ENCODE measurements at regions of chr10 and their contacts with region 1.

Region 1: DNA sequence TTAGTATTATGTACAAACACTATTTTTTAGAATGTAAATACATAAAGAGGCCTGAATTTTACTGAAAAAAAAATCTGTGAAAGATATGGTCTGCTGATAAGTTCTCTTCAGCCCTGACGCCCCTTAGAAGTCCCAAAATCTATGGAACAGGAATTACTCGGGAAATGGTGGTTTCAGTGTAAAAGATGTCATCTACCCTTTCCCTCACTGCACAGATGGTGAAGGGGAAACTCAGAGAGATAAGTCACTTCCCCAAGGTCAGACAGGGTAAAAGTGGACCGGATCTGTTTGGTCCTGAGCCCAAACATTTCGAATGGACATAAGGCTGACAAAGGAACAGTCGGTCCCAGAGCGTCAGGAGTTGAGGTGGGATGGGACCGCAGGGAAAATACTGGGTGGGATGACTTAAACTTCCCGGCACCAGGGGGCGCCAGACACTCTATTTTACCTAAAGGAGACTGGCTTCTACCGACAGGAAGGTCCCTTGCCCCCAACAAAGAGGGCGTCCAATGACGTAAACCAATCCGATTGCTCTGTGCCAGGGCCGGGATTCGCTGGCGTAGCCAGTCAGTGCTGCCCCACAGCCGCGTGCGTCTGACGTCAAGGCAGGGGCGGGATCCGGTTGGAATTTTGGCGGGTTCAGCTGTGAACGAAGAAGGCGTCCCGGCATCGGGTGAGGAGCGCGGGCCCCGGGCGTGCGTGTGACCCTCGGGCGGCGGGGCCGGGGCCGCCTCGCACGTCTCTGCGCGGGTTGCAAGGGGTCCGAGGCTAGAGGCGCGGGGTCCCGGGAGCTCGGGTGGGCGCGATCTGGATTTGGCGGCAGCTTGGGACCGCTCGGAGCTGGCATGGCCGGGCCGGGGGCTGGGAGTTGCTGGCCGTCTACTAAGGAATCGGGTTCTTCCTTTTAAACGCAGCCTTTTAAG is at the start of gene MCM10:
- DNase-seq: peak; percentile 96
- ATAC-seq: peak; percentile 99
- H3K4me3 ChIP-seq: peak within 1 kb of the TSS; percentile 81
- H3K27ac ChIP-seq: peak within 1 kb of the TSS; percentile 41
- H3K4me1 ChIP-seq: peaks cover 7% of the 10 kb centered on the region
- H3K27me3 ChIP-seq: no peaks in the 10 kb centered on the region
- CTCF ChIP-seq: peak; percentile 73 to 93 (median 79)
- EP300 ChIP-seq: no peak
- POLR2A ChIP-seq: peak; percentile 73
- RAD21 ChIP-seq: peak; percentile 67
- polyA plus RNA-seq, gene MCM10: 5.8 to 6.8 TPM

Region 2: DNA sequence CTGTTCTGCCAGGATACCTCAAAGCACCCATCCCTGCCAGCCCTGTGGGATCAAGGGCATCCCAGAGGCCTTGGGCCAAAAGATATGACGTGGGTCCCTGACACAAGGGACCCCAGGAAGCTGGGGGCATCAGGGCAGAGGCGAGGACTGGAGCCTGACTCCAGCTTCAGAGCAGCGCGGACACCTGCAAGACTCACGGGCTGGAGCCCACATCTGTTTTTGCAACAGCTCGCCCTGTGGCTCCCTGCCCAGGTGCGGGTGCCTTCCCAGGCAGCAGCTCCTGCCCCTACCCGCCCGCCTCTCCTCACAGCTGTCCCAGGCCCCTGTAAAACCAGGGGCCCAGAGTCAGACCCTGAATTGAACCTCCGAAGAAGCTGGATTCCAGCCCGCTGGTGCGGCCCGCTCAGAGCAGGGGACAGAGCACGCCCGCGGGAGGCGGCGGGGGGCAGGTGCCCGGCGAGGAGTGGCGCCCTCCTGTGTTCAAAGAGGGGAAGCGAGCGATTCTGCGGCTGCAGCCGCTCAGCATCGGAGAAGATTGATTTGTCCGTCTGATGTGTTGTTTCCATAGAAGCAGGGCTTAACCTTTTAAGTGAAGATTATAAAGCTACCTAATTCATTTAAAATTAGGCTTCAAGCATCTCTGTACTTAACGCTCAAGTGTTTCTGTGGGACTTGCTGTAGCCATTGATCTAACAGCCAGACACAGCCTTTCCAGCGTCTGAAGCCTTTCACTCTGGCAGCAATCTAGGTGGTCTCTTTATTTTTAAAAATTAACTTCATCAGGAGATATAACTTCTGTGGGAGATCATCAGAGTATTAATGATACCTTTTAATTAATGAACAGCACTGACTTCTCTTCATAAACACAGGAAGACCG is 279.2 kb after region 1 on chr10:
- CTCF ChIA-PET with region 1: no interaction called
- POLR2A ChIA-PET with region 1: no interaction called
- RAD21 ChIA-PET with region 1: no interaction called
- SMC1A ChIA-PET with region 1: no interaction called
- in situ Hi-C with region 1: no loop called
- intact Hi-C with region 1: loop called (anchors 10 kb)
- DNase-seq: no peak
- ATAC-seq: peak; percentile 95
- H3K4me3 ChIP-seq: no peak overlapping the region
- H3K27ac ChIP-seq: no peak overlapping the region
- H3K4me1 ChIP-seq: 0 out of 2 replicates have a peak, but pooled peaks cover 3% of the 10 kb centered on the region
- H3K27me3 ChIP-seq: peaks cover 8 to 9% of the 10 kb centered on the region in 2 experiments; a peak in 3 of 4 replicates
- CTCF ChIP-seq: peak; percentile 72 to 81 (median 80)
- EP300 ChIP-seq: no peak
- POLR2A ChIP-seq: no peak
- RAD21 ChIP-seq: peak; percentile 50

Measured in GM12878 (cell line).